Posterior cingulate gyrus (tissue), 11 donors: ENCODE measurements at regions of chr3 and their contacts with region 1.

Region 1: DNA sequence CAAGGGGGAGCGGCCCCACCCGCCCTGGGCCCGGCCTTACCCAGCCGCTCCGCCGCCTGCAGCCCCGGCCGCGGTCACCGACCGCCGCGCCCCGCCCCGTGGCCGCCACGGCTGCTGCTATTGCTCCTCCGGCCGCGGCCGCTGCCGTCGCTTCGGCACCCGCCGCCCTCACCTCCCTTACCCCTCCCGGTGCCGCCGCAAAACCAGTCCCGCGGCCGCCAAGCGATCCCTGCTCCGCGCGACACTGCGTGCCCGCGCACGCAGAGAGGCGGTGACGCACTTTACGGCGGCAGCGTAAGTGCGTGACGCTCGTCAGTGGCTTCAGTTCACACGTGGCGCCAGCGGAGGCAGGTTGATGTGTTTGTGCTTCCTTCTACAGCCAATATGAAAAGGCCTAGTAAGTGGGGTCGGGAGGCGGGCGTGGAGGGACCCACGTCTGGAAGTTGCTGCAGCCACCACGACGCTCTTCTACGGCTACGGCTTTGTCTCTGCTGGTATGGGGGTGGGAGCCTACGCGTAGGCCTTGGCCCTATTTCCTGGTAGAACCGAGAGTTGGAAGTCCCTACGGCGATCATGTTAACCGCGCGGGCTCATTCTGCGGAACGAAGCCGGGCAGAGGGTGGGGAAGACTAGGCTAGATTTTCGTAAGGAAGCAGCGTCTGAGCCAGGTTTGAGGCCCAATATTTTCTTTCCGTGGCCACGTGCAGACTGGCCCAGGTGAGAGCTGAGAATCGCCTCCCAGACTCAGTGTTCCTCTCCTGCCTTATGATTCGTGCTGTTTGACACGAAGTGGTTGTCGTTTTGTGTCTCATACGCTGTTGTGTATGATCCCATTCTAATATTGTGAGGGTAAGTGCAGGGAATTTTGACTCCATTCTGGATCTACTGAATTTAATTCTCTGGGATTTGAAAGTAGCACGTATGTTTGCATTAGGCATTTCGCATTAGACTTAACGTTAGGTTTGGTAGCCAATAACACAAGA is at the starts of genes GNL3 and PBRM1:
- DNase-seq: peak; percentile 85 to 99 (median 92)

Region 2: GRCh38 chr3:52428151-52429005 is 257.6 kb before region 1 on chr3:
- intact Hi-C with region 1: loop called (anchors 10 kb)
- DNase-seq: peak in 7 of 10 donors; percentile 55 to 87 (median 65)

Region 3: DNA sequence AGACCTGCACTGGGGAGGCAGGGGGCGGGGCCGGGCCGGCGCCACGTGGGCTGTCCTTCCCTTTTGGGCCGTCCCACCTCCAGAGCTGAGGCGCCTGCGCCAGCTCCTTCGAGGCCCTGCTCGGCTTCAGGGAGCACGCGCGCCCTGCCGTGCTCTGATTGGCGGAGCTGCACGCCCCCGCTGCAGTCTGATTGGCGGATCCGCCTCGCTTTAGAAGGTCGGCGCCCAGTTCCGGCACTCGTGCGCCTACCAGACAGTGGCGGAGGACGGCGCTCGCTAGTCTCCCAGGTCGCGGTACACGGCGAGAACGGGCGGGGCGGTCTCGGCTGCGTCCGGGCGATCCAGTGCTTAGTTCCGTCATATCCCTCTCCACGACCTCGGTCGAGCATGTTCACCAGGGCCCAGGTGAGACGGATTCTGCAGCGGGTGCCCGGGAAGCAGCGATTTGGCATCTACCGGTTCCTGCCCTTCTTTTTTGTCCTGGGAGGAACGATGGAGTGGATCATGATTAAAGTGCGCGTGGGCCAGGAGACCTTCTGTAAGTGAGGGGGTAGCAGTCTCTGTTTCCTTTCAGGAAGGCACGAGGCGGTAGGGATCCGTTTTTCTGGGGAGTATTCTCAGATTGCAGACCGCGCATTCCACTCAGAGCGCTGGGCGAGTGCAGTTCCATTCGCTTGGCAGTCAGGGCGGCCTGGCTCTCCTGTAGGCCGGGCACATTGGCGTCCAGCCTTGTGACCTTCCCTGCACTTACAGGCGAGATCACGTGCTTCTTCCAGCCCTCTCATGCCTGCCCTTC is 149.4 kb before region 1 on chr3 and contains the start of gene UQCC5:
- intact Hi-C with region 1: loop called (anchors 2 kb)
- DNase-seq: peak; percentile 94 to 100 (median 96)

Region 4: GRCh38 chr3:52570076-52570475 is 115.9 kb before region 1 on chr3:
- intact Hi-C with region 1: no loop called
- DNase-seq: no peak

Region 5: DNA sequence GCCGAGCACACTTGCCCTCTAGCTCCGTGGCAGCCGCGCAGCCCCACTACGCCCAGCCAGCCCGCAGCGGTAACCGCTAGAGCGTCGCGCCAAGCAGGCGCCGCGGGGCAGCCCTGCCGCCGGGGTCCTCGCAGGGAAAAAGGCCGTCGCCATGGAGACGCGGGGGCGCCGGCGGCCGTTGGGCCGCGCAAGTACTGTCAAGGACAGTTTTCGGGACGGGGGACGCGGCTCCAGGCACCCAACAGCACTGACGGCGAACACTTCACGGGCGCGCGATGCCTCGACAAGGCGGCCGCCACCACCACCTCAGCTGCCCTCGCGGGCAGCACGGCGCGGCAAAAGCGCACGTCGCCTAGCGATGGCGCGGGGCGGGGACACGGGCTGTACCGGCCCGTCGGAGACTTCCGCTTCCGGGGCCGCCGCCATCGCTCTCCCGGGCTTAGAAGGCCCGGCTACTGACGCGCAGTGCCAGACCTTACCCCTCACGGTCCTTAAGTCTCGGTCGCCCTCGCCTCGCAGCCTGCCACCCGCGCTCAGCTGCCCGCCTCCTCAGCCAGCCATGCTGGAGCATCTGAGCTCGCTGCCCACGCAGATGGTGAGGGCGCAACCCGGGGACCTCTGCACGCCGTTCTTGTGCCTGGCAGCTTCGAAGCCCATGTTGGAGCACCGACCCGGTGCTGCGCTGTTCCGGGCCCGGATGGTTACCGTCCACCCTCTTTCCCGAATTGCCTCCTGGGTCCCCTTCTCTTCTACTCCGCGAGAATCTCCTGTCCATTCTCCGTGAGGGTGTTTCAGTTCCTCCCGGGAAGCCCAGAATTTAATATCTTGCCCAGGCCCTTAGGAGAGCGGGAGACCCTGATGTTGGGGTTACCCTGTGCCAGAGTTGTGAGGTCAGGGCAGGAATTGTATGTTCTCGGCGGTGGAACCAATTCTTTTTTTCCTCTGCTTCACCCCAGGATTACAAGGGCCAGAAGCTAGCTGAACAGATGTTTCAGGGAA is 20.0 kb after region 1 on chr3 and contains the starts of genes GLT8D1 and SPCS1:
- intact Hi-C with region 1: loop called (anchors 2 kb)
- DNase-seq: peak; percentile 77 to 99 (median 88)

Region 6: DNA sequence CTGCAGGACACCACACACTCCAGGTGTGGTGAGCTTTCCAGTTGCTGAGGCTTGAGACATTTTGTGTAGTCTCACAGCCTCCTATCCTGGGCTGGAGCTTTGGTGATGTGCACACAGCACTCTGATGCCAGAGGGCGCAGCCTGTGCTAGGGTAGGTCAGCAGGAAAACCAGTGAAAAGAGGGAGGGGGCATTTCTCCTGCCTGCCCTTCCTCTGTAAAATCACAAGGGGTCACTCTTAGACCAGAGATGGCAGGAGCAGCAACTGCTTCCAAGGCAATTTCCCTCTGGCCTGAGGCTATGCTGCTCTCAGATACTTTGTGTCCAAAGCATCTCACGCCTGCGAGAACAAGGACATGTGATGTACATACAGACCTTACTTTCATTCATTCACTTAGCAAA is 165.3 kb after region 1 on chr3:
- intact Hi-C with region 1: no loop called
- DNase-seq: peak in 3 of 10 donors; percentile 25 to 35 (median 35)